Mucosa of descending colon (tissue), 3 donors: ENCODE measurements at regions of chr3 and their contacts with region 1.

Region 1: GRCh38 chr3:71599416-71599815 is 15.9 kb upstream of the FOXP1 start:
- DNase-seq: no peak
- ATAC-seq: no peak
- H3K4me3 ChIP-seq: no peak overlapping the region
- H3K4me1 ChIP-seq: no peaks in the 10 kb centered on the region
- CTCF ChIP-seq: no peak

Region 2: DNA sequence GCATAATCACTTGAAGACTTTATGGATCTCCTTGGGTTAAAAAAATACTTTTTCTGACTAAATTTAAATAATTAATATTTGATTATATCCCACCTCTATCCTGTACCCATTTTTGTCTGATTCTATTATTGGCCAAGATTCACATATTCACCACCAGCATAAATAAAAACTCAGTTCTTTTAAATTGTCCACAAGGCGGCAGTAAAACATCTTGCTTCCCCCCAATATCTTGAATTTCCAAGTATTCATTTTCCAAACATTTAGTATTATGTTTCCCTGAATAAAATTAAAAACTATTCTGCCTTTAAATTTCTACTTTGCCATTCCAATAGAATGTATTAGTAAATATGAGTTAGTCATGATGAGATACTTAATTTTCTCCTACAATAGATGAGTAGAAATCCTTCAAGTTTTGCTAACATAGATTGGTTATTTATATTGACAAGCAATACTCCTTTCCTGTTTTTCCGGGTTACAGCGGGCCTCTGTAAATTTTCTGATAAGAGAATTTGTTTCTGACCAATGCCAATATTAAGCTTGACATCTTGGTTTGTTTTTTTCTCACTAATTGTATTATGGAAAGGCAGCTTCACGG is 1068.3 kb before region 1 on chr3:
- intact Hi-C with region 1: loop called in 1 of 2 experiments (anchors 10 kb)
- DNase-seq: no peak
- ATAC-seq: no peak
- H3K4me3 ChIP-seq: no peak overlapping the region
- H3K4me1 ChIP-seq: no peaks in the 10 kb centered on the region
- CTCF ChIP-seq: no peak

Region 3: GRCh38 chr3:71444028-71444860 is 155.2 kb before region 1 on chr3:
- intact Hi-C with region 1: no loop called
- DNase-seq: peak; percentile 52 to 83 (median 61)
- ATAC-seq: peak; percentile 79
- H3K4me3 ChIP-seq: no peak overlapping the region
- H3K4me1 ChIP-seq: peaks cover 12% of the 10 kb centered on the region
- CTCF ChIP-seq: no peak